AG04449 (cell line): ENCODE measurements at regions of chr19 and their contacts with region 1.

Region 1: GRCh38 chr19:34345947-34346351 is 19.0 kb upstream of the GPI start:
- DNase-seq: no peak
- H3K4me3 ChIP-seq: no peak overlapping the region
- CTCF ChIP-seq: peak; percentile 82

Region 2: DNA sequence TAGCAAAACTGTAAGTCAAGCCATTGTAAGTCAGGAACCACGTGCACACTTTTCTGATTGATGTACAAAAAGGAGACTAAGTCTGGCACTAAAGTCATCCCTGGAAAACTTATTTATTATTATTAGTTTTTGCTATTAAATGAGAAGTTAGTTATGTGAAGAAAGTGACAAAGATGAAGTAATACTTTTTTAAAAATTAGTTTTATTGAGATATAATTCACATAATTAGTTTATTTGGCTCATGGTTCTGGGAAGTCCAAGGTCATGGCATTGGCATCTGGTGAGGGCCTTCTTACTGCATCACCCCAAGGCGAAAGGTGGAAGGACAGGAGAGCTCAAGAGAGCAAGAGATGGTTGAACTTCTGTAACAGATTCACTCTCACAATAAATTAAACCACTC is 54.7 kb before region 1 on chr19:
- CTCF ChIA-PET with region 1: no interaction called
- POLR2A ChIA-PET with region 1: no interaction called
- DNase-seq: no peak
- H3K4me3 ChIP-seq: no peak overlapping the region
- CTCF ChIP-seq: no peak

Region 3: GRCh38 chr19:34327851-34328250 is 18.1 kb before region 1 on chr19:
- CTCF ChIA-PET with region 1: interaction called, 17 read pairs
- POLR2A ChIA-PET with region 1: no interaction called
- DNase-seq: no peak
- H3K4me3 ChIP-seq: no peak overlapping the region
- CTCF ChIP-seq: no peak

Region 4: DNA sequence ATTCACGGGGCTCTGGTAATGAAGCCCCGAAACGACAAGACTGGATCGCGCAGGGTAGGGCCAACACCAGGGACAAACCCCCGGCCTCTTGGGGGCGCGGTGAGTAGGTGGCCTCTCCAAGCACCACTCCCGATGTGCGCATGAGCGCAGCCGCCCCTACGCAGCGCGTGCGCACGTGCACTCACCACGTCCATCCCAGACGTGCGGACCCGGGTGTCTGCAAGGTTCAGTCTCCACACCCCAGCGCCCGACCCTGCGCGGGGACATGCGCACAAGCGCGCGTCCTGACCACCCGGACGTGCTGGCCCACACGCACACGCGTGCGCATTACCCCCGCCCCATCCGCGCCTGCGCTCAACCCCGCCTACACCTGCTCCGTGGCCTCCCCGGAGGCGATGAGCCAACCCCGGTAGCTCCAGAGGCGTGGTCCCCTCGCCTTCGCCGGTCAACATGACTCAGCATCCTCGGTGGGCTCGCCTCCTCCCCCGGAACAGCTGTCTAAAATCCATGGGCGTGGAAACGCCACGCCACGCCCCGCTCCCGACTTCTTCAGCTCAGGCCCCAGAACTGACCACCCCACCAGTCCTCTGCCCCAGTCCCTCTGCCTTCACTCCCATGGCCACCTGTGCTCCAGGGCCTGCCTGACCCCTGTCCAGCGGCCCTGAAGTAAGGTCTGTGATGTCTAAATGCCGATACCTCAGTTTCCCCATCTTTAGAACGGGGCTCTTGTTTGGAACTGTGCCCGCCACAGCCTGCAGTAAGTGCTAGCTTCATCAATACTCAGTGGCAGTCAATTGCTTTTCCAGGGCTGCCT is 13.4 kb after region 1 on chr19:
- CTCF ChIA-PET with region 1: interaction called, 46 read pairs
- POLR2A ChIA-PET with region 1: interaction called, 3 read pairs
- DNase-seq: peak; percentile 83
- H3K4me3 ChIP-seq: peak overlapping the region; percentile 45
- CTCF ChIP-seq: peak; percentile 73

Region 5: GRCh38 chr19:34461375-34462100 is 115.6 kb after region 1 on chr19:
- CTCF ChIA-PET with region 1: no interaction called
- POLR2A ChIA-PET with region 1: no interaction called
- DNase-seq: peak; percentile 52
- H3K4me3 ChIP-seq: no peak overlapping the region
- CTCF ChIP-seq: no peak